Adrenal gland (tissue), 19 donors: ENCODE measurements at regions of chr4 and their contacts with region 1.

Region 1: GRCh38 chr4:140996766-140997165 is 136.5 kb downstream of the RNF150 start:
- DNase-seq: no peak
- H3K4me3 ChIP-seq: no peak overlapping the region
- H3K27ac ChIP-seq: no peak overlapping the region
- H3K4me1 ChIP-seq: peaks cover 32 to 35% of the 10 kb centered on the region in 2 donors
- H3K27me3 ChIP-seq: no peaks in the 10 kb centered on the region
- CTCF ChIP-seq: peak in 1 of 6 experiments; percentile 38
- POLR2A ChIP-seq: no peak

Region 2: DNA sequence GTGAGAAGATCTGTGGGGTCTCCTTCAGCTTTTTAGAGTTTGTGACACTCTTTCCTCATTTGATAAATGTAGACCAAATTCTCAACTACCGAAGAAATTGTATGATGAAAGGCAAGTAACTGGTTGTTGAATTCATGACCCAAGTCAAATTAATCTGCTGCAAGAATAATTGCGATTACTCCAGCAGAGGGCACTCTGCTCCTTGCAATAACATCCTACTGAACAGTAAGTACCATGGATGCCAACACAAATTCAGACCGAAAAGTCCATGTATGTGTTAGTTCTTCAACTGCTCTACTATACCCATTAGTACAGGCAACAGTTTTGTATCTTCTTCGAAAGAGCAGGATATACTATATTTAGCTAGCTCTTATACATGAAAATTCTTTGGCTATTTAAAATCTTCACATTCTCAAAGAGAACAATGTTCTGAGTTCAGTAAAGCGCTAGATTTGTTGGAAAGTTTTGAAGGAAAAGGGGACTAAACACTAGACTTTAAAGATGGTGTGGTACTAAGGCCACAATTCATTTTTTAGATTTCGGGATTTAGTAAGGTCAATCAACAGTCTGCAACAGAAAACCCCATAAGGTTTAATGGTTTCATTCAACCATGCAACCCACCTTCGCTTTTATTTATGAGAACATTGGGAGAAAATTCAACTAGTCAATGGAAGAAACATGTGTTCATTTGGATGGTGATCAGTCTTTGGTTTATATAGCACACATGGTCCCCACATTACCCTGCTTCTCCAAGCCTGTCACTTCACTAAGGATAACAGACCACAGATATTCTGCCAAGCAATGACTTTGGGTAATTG is 135.2 kb before region 1 on chr4:
- intact Hi-C with region 1: loop called in 1 of 2 experiments (anchors 10 kb)
- DNase-seq: peak; percentile 69 to 92 (median 76)
- H3K4me3 ChIP-seq: no peak overlapping the region
- H3K27ac ChIP-seq: no peak overlapping the region
- H3K4me1 ChIP-seq: peaks cover 0 to 3% of the 10 kb centered on the region in 2 donors
- H3K27me3 ChIP-seq: no peaks in the 10 kb centered on the region
- CTCF ChIP-seq: peak; percentile 68 to 92 (median 90)
- POLR2A ChIP-seq: no peak

Region 3: DNA sequence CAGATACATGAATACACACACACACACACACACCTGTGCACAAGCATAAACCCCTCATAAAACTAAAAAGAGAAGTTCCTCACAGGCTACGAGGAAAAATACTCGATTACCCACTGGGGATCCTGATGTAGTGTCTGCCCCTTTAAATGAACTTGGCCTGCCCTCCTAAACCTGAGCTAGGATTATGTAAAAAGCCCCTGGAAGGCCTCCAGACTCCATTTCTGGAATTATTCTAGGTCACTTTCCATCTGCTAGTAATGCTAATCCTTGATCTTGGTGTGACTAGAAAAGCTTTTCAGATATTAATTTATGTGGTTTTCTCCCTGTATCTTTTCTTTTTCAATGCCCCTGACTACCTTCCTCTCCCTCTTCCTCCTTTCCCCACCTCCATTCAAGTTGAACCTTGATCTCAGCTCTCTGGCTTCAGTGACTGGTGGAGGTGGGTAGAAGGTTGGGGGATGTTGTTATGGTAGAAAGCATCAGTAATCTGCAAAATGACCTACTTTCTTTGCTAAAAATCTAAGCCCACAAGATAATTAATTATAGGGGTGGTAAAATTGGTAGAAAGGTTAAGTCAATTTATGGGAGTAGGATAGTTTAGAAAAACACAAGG is 198.4 kb after region 1 on chr4:
- intact Hi-C with region 1: no loop called
- DNase-seq: peak in 4 of 7 donors; percentile 23 to 48 (median 38)
- H3K4me3 ChIP-seq: no peak overlapping the region
- H3K27ac ChIP-seq: no peak overlapping the region
- H3K4me1 ChIP-seq: peaks cover 0 to 8% of the 10 kb centered on the region in 2 donors
- H3K27me3 ChIP-seq: no peaks in the 10 kb centered on the region
- CTCF ChIP-seq: no peak
- POLR2A ChIP-seq: no peak